ENCODE measurements at regions of chr14 and their contacts with region 1.

Region 1: DNA sequence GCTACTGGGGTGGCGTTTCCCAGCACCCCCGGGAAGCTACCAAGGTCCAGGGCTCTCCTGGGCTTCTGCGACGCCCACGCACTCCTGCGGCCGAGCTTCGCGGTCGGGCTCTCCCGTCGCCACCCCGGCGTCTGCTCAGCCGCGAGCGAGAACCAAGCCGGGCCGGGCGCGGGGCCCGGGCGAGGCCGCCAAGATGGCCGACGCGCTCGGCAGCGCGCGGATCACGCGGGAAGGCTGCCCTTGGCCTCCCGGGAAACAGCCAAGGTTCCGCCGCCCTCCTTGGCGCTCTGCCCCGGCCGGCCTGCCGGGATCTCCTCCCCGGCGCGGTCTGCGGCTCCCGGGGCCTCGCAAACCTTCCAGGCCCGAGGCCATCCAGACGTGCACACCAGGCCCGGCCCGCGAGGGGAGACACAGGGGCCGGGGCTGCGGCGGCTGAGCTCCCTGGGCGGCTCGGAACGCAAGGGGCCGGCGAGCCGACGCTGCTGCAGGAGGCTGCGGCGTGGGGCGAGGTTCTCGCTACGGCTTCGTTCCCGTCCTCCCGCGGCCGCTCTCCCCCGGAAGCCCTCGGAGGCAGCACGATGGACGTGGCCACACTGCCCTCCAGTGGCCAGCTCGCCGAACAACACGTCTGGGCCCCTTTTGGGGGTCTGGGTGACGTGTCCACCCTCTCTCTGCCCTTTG is 23.5 kb upstream of the ZFP36L1 start:
- DNase-seq: peak; percentile 90
- H3K4me3 Mint-ChIP-seq: peak overlapping the region; percentile 76
- H3K27ac Mint-ChIP-seq: peak overlapping the region; percentile 95
- H3K4me1 Mint-ChIP-seq: peaks cover 69% of the 10 kb centered on the region
- H3K27me3 Mint-ChIP-seq: no peaks in the 10 kb centered on the region

Region 2: GRCh38 chr14:67837011-67837624 is 979.3 kb before region 1 on chr14:
- CTCF ChIA-PET with region 1: interaction called, 4 read pairs
- intact Hi-C with region 1: loop called (anchors 5 kb)
- DNase-seq: peak; percentile 73
- H3K4me3 Mint-ChIP-seq: no peak overlapping the region
- H3K27ac Mint-ChIP-seq: no peak overlapping the region
- H3K4me1 Mint-ChIP-seq: no peaks in the 10 kb centered on the region
- H3K27me3 Mint-ChIP-seq: no peaks in the 10 kb centered on the region

Region 3: DNA sequence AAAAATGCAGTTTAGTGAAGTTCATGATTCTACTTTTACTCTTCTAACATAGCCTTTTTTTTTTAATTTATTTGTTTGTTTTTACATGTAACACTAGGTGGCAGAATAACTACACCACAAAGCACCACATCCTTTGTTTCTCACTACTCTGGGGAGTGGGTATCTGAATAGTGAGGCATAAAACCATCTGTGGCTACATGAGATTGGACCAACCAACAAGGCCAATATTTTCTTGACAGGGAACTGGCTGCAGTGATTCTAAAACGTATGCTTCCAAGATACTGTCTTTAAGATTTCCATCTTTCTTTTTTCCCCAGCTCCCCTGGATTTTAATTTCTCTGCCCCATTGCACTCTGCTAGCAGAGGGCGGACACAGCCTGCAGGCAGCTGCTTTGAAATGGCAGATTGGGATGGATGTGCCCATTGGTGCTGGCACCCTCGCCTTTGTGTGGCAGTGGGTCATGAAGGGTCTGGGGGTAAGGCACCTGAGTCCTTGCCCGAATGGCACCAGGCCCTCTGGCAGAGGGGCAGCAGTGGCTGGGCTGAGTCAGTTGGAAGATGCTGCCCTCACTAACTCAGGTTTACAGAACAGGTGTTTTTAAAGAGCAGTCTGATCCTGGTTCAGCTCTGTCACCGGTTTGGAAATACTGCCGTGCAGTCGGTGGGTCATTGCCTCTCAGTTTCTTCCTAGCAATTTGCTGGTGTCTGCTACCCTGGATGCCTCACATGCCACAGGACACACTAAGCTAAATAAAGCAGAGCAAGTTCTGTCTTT is 567.7 kb before region 1 on chr14:
- CTCF ChIA-PET with region 1: interaction called, 86 read pairs
- intact Hi-C with region 1: loop called (anchors 1 kb)
- DNase-seq: no peak
- H3K4me3 Mint-ChIP-seq: no peak overlapping the region
- H3K27ac Mint-ChIP-seq: no peak overlapping the region
- H3K4me1 Mint-ChIP-seq: peaks cover 41% of the 10 kb centered on the region
- H3K27me3 Mint-ChIP-seq: no peaks in the 10 kb centered on the region

Region 4: DNA sequence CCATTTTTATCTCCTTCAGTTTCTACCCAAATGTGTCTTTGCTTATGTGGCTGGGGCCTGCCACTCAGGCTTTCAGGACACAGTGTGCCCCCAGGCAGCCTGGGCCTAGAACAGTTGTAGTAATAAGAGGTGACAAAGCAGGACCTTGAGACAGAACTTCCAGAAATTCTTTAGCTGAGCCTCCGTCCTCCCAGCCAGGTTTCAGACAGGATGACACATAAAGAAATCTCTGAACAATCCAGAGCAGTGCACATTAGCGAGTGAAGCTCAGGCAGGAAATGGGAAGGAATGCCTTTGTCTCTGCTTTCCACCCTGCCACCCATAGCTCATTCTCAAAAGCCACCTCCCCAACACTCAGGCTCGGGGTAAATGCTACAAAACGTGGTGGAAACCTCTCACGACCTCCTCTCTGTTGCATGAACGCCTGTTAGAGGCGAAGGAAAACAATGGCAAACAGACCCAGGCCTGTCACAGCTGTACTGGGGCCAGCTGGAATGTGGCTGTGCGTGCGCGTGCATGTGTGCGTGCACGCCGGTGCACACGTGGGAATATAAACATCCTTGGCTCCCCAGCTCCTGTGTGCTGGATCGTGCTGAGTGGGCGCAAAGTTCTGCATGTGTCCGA is 310.3 kb before region 1 on chr14:
- CTCF ChIA-PET with region 1: interaction called, 3 read pairs
- intact Hi-C with region 1: loop called (anchors 5 kb)
- DNase-seq: peak; percentile 11
- H3K4me3 Mint-ChIP-seq: no peak overlapping the region
- H3K27ac Mint-ChIP-seq: peak overlapping the region; percentile 20
- H3K4me1 Mint-ChIP-seq: peaks cover 44% of the 10 kb centered on the region
- H3K27me3 Mint-ChIP-seq: no peaks in the 10 kb centered on the region

Region 5: DNA sequence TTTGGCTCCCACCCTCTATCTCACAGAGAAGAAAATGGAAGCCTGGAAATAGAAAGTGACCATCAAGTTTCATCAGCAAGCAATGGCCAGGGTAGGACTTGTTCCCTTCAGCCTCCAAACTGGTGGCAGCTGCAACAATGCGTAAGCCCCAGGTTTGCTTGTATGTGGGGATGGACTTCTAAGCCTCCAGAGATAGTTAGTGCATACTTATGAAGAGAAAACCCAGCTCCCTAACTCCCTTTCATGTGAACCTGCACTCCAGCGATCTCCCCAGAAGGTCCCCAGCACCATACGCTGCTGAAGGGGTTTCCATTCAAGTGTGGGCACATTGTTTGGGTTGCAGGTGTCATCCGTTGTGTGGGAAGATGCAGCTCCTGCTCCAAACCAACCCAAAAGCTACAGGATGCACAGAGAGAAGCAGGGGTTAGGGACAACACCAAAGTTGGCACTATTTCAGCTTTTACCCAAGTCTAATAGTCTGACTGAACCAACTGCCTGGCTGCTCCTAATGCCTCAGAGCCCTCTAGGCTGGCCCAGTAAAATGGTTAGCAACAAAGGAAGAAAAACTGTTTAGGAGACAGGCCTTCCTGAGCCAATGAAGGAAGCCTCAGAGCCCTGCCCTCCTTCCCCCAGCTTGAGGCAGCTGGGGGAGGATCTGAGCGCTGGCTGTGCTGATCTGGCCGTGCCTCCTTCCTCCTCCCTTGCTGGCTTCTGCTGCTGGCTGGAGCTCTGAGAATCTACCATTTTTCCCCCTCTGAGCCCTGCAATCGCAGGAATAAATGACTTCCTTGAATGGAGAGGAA is 35.8 kb before region 1 on chr14:
- CTCF ChIA-PET with region 1: interaction called, 270 read pairs
- intact Hi-C with region 1: loop called (anchors 5 kb)
- DNase-seq: peak; percentile 48
- H3K4me3 Mint-ChIP-seq: peak overlapping the region; percentile 61
- H3K27ac Mint-ChIP-seq: peak overlapping the region; percentile 62
- H3K4me1 Mint-ChIP-seq: peaks cover 72% of the 10 kb centered on the region
- H3K27me3 Mint-ChIP-seq: no peaks in the 10 kb centered on the region

Region 6: DNA sequence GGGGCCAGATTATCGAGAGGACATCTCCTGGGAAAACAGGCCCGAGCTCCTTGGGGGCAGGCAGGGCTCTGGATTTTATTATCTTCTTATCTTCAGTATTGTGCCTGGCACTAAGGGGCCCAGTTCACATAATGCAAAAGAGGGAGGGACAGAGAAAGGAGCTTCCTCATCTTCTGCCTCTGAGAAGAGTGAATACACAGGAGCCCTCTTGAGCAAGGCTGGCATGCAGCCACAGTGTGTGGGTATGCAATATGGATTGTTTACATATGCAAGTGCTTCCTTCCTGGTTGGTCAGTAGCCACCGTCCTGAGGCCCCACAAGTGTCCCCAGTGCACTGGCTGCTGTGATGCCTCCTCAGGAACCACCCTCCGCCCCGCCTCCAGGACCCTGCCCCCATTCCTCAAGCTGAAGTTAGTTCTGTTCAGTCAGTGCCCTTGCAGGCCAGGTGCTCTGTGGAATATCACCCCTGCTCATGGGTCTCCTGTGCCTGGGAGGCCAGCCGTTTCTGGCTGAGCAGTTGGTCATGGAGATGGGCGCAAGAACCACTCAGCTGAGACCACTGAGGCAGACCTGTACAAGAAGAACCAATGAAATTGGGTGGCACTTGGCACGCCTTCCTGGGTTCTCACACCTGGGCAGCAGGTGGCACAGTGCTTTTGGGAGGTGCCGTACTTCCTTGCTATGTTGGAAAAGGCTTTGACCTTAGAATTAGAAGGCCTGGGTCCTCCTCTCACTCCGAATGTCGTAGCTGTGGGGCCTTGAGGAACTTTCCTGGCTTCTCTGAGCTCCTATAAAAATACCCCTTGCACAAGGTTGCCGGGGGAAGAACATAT is 197.8 kb after region 1 on chr14:
- CTCF ChIA-PET with region 1: no interaction called
- intact Hi-C with region 1: no loop called
- DNase-seq: no peak
- H3K4me3 Mint-ChIP-seq: no peak overlapping the region
- H3K27ac Mint-ChIP-seq: no peak overlapping the region
- H3K4me1 Mint-ChIP-seq: peaks cover 6% of the 10 kb centered on the region
- H3K27me3 Mint-ChIP-seq: no peaks in the 10 kb centered on the region

Region 7: DNA sequence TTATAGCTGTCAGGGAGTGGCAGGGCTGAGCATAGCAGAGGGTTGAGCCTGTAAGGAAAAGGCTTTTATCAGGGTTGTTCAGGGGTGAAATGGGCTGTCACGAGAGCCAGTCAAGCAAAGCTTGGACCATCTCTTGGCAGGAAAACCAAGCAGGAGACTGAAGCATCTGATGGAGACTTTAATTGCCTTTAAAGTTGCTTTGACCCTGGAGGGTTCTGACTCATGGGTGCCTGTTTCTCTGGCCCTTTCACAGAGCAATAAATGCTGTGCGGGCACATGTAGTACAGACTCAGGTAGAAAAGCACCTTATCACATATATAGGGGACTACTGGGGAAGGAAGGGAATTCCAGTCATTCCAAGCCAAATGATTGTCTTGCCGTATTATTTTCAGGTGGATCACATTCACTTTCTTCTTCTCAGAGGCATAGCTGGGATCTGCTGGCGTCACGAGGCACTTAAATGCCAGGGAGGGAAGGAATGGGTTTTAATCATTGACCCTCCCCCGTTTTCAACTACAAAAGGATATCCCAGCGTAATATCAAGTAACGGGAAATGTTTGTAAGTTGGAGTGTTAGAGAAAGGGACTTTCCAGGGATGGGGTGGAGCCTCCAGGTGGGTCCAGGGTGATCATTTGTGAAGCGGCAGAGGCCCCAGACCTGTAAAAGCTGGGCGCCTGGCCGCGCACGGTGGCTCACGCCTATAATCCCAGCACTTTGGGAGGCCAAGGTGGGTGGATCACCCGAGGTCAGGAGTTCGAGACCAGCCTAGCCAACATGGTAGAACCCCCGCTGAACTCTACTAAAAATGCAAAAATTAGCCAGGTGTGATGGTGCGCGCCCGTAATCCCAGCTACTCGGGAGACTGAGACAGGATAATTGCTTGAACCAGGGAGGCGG is 703.0 kb after region 1 on chr14:
- CTCF ChIA-PET with region 1: no interaction called
- intact Hi-C with region 1: no loop called
- DNase-seq: no peak
- H3K4me3 Mint-ChIP-seq: no peak overlapping the region
- H3K27ac Mint-ChIP-seq: no peak overlapping the region
- H3K4me1 Mint-ChIP-seq: no peaks in the 10 kb centered on the region
- H3K27me3 Mint-ChIP-seq: no peaks in the 10 kb centered on the region